PC-3 (cell line): ENCODE measurements at regions of chr10 and their contacts with region 1.

Region 1: DNA sequence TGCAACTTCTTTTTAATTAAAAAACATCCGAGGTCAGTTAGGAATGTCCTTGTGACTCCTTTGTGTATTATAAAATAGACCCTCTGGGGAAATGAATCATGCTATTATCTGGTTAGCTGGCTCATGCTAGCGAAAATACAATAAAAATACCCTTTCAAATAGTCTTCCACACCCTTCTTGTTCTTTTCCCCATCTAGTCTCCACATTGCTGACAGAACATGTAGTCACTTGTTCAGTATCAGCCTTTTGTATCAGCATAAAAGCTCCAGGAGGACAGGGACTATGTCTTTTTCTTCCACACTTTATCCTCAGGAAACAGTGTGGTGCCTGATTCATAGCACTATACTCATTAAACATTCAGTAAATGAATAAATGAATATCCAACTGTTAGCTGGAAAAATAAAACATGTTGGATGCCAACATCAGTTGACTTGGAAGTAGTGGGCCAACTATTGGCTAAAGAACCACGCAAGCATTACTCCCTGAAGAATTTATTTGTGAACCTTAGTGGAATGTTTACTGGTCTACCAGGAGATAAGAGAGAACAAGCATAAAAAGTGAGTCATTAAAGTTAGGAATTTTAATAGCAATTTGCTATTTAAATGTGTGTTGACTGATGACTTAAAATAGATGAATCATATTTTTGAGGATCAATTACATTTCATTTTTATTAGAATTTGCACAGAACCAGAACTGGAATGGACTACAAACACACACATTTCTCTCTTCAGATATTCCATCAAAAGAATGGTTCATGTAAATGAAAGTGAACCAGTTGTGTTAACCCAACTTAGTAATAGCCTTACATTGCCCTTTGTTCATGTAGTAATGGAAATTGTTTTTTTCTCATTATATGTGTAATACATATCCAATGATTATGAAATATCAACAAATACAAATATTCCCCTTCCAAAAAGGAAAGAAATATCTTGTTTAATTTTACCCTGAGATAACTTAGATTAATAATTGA is 129.6 kb downstream of the DKK1 start:
- DNase-seq: peak; percentile 100
- ATAC-seq: peak; percentile 80
- H3K4me3 ChIP-seq: peak overlapping the region; percentile 36
- H3K27ac ChIP-seq: peak overlapping the region; percentile 82
- H3K4me1 ChIP-seq: peaks cover 62% of the 10 kb centered on the region
- H3K27me3 ChIP-seq: no peaks in the 10 kb centered on the region
- CTCF ChIP-seq: no peak

Region 2: DNA sequence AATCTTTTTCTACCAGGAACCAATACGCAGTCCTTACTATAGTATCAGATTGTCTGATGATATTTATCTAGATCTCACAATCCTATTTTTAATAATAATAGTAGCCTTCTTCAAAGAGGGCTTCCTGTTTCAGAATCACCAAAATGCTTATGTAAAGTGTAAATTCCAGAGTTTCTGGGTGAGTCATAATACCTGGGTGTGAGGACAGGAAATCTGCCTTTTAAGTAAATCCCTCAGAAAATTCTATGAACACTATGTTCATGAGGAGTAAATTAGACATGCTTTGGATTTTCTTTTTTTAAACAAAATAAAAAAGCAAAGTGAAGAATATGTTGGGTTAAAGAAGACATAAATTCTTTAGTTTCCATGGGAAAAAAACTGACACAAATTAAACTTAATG is 109.1 kb before region 1 on chr10:
- CTCF ChIA-PET with region 1: no interaction called
- POLR2A ChIA-PET with region 1: interaction called, 4 read pairs
- intact Hi-C with region 1: loop called (anchors 1 kb)
- DNase-seq: peak; percentile 93
- ATAC-seq: peak; percentile 53
- H3K4me3 ChIP-seq: 0 out of 2 replicates have a peak overlapping the region, but pooled peaks have one; percentile 0
- H3K27ac ChIP-seq: peak overlapping the region; percentile 74
- H3K4me1 ChIP-seq: peaks cover 52% of the 10 kb centered on the region
- H3K27me3 ChIP-seq: no peaks in the 10 kb centered on the region
- CTCF ChIP-seq: no peak

Region 3: GRCh38 chr10:52368741-52369140 is 75.0 kb before region 1 on chr10:
- CTCF ChIA-PET with region 1: no interaction called
- POLR2A ChIA-PET with region 1: no interaction called
- intact Hi-C with region 1: no loop called
- DNase-seq: no peak
- ATAC-seq: peak; percentile 33
- H3K4me3 ChIP-seq: no peak overlapping the region
- H3K27ac ChIP-seq: no peak overlapping the region
- H3K4me1 ChIP-seq: no peaks in the 10 kb centered on the region
- H3K27me3 ChIP-seq: no peaks in the 10 kb centered on the region
- CTCF ChIP-seq: peak; percentile 56

Region 4: GRCh38 chr10:52409928-52410327 is 33.8 kb before region 1 on chr10:
- CTCF ChIA-PET with region 1: interaction called, 3 read pairs
- POLR2A ChIA-PET with region 1: interaction called, 9 read pairs
- intact Hi-C with region 1: loop called (anchors 1 kb)
- DNase-seq: peak; percentile 67
- ATAC-seq: peak; percentile 25; the same call in 1 of the 2 replicates
- H3K4me3 ChIP-seq: no peak overlapping the region
- H3K27ac ChIP-seq: peak overlapping the region; percentile 31
- H3K4me1 ChIP-seq: peaks cover 20% of the 10 kb centered on the region
- H3K27me3 ChIP-seq: no peaks in the 10 kb centered on the region
- CTCF ChIP-seq: no peak

Region 5: GRCh38 chr10:52551046-52551445 is 107.3 kb after region 1 on chr10:
- CTCF ChIA-PET with region 1: no interaction called
- POLR2A ChIA-PET with region 1: no interaction called
- intact Hi-C with region 1: no loop called
- DNase-seq: peak; percentile 78
- ATAC-seq: peak; percentile 90
- H3K4me3 ChIP-seq: no peak overlapping the region
- H3K27ac ChIP-seq: peak overlapping the region; percentile 5
- H3K4me1 ChIP-seq: peaks cover 8% of the 10 kb centered on the region
- H3K27me3 ChIP-seq: no peaks in the 10 kb centered on the region
- CTCF ChIP-seq: no peak

Region 6: GRCh38 chr10:52853704-52854103 is 410.0 kb after region 1 on chr10:
- CTCF ChIA-PET with region 1: no interaction called
- POLR2A ChIA-PET with region 1: no interaction called
- intact Hi-C with region 1: loop called (anchors 10 kb)
- DNase-seq: no peak
- ATAC-seq: no peak
- H3K4me3 ChIP-seq: no peak overlapping the region
- H3K27ac ChIP-seq: no peak overlapping the region
- H3K4me1 ChIP-seq: no peaks in the 10 kb centered on the region; the same call in 1 of the 2 replicates
- H3K27me3 ChIP-seq: no peaks in the 10 kb centered on the region
- CTCF ChIP-seq: no peak